ENCODE measurements at regions of chr2 and their contacts with region 1.

Region 1: GRCh38 chr2:20326163-20326780 is 24.4 kb downstream of the PUM2 start:
- DNase-seq: peak; percentile 30
- H3K4me3 ChIP-seq: no peak overlapping the region
- H3K27ac ChIP-seq: no peak overlapping the region
- H3K27me3 ChIP-seq: no peaks in the 10 kb centered on the region
- CTCF ChIP-seq: peak; percentile 91

Region 2: DNA sequence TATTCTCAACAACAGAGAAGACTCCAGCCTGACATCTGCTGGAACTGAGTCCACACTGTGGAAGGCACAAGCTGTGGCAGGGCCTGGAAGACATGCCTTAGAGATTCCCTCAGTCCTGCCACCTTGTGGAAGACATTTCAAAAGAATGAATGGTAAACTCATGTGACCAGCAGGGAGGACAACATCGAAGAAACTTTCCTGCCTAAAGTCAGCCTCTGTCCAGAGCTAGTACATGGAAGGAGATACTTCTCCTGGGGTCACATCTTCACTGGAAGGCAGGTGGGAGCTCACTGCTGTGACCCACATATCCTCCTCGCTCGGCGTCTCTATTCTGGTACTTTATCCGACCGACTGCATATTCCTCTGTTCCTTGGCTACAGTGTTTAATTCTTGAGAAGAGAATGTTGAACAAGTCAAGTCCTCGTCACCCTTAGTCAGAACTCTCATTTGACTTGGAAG is 35.1 kb before region 1 on chr2:
- CTCF ChIA-PET with region 1: interaction called, 20 read pairs
- POLR2A ChIA-PET with region 1: no interaction called
- DNase-seq: peak; percentile 44
- H3K4me3 ChIP-seq: no peak overlapping the region
- H3K27ac ChIP-seq: no peak overlapping the region
- H3K27me3 ChIP-seq: no peaks in the 10 kb centered on the region
- CTCF ChIP-seq: peak; percentile 70

Region 3: GRCh38 chr2:20313659-20314058 is 12.6 kb before region 1 on chr2:
- CTCF ChIA-PET with region 1: interaction called, 31 read pairs
- POLR2A ChIA-PET with region 1: no interaction called
- DNase-seq: no peak
- H3K4me3 ChIP-seq: no peak overlapping the region
- H3K27ac ChIP-seq: no peak overlapping the region
- H3K27me3 ChIP-seq: no peaks in the 10 kb centered on the region
- CTCF ChIP-seq: no peak

Region 4: DNA sequence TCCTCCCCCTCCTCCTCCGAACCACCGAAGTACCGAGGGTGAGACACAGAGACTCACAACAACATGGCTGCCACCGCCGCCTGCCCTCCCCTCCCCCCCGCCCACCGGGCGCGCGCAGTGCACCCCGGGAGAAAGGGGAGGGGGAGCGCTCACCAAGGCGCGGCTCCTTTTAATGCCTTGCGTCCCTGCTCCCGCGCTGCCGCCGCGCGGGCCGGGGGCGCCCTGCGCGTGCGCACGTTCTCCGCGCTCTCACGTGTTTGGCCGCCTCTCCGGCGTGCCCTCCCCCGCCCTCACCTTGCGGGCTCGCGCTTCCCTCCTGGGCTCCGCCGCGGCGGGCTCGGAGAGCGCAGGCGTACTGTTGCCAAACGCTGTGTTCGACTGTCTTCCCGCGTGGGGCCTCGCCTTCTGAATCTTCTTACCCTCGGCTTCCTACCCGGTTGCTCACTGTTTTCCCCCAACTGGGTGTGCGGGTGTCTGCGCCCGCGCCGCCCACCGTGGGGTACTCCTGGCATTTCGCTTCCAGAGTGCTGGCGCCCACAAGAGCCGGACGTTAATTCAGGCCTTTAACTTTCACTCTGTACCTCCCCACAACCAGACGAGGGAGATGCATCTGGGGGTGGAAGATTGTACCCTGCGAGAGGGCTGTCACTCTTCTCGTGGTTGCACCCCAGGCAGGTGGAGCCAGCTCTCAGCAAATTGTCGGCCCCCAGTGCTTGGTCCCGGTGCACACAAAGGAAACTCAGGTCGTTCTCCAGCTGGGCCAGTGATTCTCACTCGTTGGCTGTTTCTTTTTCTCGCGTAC is 24.7 kb after region 1 on chr2 and contains the start of gene PUM2:
- CTCF ChIA-PET with region 1: interaction called, 41 read pairs
- POLR2A ChIA-PET with region 1: interaction called, 3 read pairs
- DNase-seq: peak; percentile 78
- H3K4me3 ChIP-seq: peak within 1 kb of the TSS; percentile 81
- H3K27ac ChIP-seq: peak within 1 kb of the TSS; percentile 85
- H3K27me3 ChIP-seq: no peaks in the 10 kb centered on the region
- CTCF ChIP-seq: no peak
- polyA plus RNA-seq, gene PUM2: 42.9 and 53.7 TPM in 2 replicates